ENCODE measurements at regions of chr7 and their contacts with region 1.

Region 1: DNA sequence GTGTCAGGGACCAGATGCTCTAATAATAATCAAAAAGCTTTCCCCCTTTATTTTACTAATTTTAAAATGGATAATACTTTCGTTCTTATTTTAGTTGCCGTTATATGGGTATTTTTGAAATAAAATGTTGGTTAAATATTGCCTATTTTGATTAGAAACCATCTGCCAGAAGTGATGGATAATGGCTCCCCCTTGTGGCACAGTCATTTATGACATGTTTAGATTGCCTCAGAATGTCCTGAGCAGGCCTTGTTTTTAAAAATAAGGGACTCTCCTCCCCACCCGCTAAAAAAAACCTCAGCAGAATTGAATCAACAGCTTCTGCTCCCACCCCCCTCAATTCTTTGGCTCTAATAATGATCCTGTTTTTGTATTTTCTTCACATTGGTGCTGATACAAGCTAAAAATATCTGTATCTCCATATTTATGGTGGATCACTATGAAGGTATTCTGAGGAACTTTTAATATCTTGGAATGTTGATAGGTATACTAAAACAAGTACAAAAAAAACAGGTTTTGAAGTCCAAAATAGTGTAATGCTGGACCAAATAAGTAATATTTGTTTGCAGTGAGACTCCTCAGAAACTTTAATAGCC is 38.8 kb downstream of the TMEM60 start:
- DNase-seq: peak; percentile 57
- ATAC-seq: peak; percentile 69
- H3K4me3 ChIP-seq: no peak overlapping the region
- H3K27ac ChIP-seq: no peak overlapping the region
- H3K4me1 ChIP-seq: peaks cover 4% of the 10 kb centered on the region; the same call in 1 of the 2 replicates
- H3K27me3 ChIP-seq: no peaks in the 10 kb centered on the region
- CTCF ChIP-seq: peak; percentile 74
- EP300 ChIP-seq: no peak
- POLR2A ChIP-seq: no peak
- RAD21 ChIP-seq: peak; percentile 77

Region 2: GRCh38 chr7:77651573-77652162 is 107.7 kb before region 1 on chr7:
- CTCF ChIA-PET with region 1: interaction called, 34 read pairs
- POLR2A ChIA-PET with region 1: no interaction called
- in situ Hi-C with region 1: loop called (anchors 5 kb)
- intact Hi-C with region 1: loop called (anchors 1 kb)
- DNase-seq: peak; percentile 36
- ATAC-seq: peak; percentile 33; the same call in 1 of the 3 replicates
- H3K4me3 ChIP-seq: no peak overlapping the region
- H3K27ac ChIP-seq: no peak overlapping the region
- H3K4me1 ChIP-seq: peaks cover 15% of the 10 kb centered on the region
- H3K27me3 ChIP-seq: no peaks in the 10 kb centered on the region
- CTCF ChIP-seq: peak; percentile 64
- EP300 ChIP-seq: no peak
- POLR2A ChIP-seq: no peak
- RAD21 ChIP-seq: no peak; the same call in 1 of the 2 replicates